Naive thymus-derived CD4-positive, alpha-beta T cell (primary cell): ENCODE measurements at regions of chr11 and their contacts with region 1.

Region 1: GRCh38 chr11:43447151-43447550 is 88.4 kb downstream of the TTC17 start:
- DNase-seq: no peak
- ATAC-seq: no peak
- H3K4me3 ChIP-seq: no peak overlapping the region
- H3K4me3 Mint-ChIP-seq: no peak overlapping the region
- H3K27ac ChIP-seq: no peak overlapping the region
- H3K27ac Mint-ChIP-seq: peak overlapping the region in 2 of 9 donors; percentile 5 to 56
- H3K4me1 ChIP-seq: no peaks in the 10 kb centered on the region
- H3K4me1 Mint-ChIP-seq: peaks cover 0 to 14% (median 0%) of the 10 kb centered on the region in 7 donors
- H3K27me3 ChIP-seq: no peaks in the 10 kb centered on the region
- H3K27me3 Mint-ChIP-seq: no peaks in the 10 kb centered on the region

Region 2: GRCh38 chr11:43504316-43504950 is 57.3 kb after region 1 on chr11:
- CTCF ChIA-PET with region 1: no interaction called
- POLR2A ChIA-PET with region 1: no interaction called
- intact Hi-C with region 1: loop called in 1 of 2 experiments (anchors 10 kb)
- DNase-seq: no peak
- ATAC-seq: no peak
- H3K4me3 ChIP-seq: no peak overlapping the region
- H3K4me3 Mint-ChIP-seq: no peak overlapping the region
- H3K27ac ChIP-seq: no peak overlapping the region
- H3K27ac Mint-ChIP-seq: no peak overlapping the region
- H3K4me1 ChIP-seq: no peaks in the 10 kb centered on the region
- H3K4me1 Mint-ChIP-seq: peaks cover 0 to 10% (median 0%) of the 10 kb centered on the region in 7 donors
- H3K27me3 ChIP-seq: no peaks in the 10 kb centered on the region
- H3K27me3 Mint-ChIP-seq: peaks cover 0 to 12% (median 10%) of the 10 kb centered on the region in 5 donors